GM12878 (cell line): ENCODE measurements at regions of chr16 and their contacts with region 1.

Region 1: GRCh38 chr16:27253526-27253930 is 15.0 kb downstream of the NSMCE1 start:
- DNase-seq: no peak
- ATAC-seq: peak; percentile 27
- H3K4me3 ChIP-seq: no peak overlapping the region
- H3K27ac ChIP-seq: peak overlapping the region; percentile 74
- H3K4me1 ChIP-seq: peaks cover 25% of the 10 kb centered on the region
- H3K27me3 ChIP-seq: no peaks in the 10 kb centered on the region
- CTCF ChIP-seq: no peak
- EP300 ChIP-seq: no peak
- POLR2A ChIP-seq: no peak
- RAD21 ChIP-seq: no peak

Region 2: DNA sequence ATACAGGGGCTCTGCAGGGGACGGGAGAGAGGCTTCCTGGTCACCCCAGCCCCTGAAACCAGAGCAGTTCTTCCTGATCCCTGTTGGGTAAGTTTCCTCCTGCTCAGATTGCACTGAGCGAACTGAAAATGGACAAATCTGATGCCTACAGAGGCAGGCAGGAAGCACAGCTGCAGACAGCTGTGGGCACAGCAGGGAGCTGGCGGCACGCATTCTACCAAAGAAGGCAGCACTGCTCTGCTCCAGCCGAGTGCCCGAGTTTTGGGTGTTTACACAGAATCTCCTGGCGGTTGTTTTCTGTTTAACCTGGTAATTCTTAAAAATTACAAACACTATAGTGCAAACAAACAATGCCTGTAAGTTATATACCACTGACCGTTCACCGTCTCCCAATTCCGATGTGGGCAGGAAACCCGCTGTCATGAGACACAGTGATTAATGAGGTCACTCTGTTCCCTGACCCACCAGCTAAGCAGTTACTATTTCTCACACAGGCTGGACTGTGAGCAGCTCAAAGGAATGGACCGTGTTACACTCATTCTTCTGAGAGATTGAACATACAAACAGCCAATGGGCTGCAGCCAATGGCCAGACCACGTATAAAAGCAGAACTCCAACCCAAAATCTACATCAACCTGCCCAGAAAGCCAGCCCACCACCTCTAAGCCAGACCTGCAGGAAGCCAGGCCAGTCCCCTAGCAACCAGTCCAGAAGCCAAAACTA is 10.5 kb before region 1 on chr16:
- CTCF ChIA-PET with region 1: interaction called, 38 read pairs
- POLR2A ChIA-PET with region 1: interaction called, 79 read pairs
- RAD21 ChIA-PET with region 1: interaction called, 51 read pairs
- SMC1A ChIA-PET with region 1: interaction called, 165 read pairs
- in situ Hi-C with region 1: no loop called
- intact Hi-C with region 1: no loop called
- DNase-seq: peak; percentile 71
- ATAC-seq: peak; percentile 91
- H3K4me3 ChIP-seq: peak overlapping the region; percentile 30; the same call in 1 of the 2 replicates
- H3K27ac ChIP-seq: peak overlapping the region; percentile 47
- H3K4me1 ChIP-seq: peaks cover 20% of the 10 kb centered on the region
- H3K27me3 ChIP-seq: no peaks in the 10 kb centered on the region
- CTCF ChIP-seq: no peak
- EP300 ChIP-seq: peak in 1 of 2 experiments; percentile 72; a peak in 2 of 4 replicates
- POLR2A ChIP-seq: no peak
- RAD21 ChIP-seq: no peak

Region 3: DNA sequence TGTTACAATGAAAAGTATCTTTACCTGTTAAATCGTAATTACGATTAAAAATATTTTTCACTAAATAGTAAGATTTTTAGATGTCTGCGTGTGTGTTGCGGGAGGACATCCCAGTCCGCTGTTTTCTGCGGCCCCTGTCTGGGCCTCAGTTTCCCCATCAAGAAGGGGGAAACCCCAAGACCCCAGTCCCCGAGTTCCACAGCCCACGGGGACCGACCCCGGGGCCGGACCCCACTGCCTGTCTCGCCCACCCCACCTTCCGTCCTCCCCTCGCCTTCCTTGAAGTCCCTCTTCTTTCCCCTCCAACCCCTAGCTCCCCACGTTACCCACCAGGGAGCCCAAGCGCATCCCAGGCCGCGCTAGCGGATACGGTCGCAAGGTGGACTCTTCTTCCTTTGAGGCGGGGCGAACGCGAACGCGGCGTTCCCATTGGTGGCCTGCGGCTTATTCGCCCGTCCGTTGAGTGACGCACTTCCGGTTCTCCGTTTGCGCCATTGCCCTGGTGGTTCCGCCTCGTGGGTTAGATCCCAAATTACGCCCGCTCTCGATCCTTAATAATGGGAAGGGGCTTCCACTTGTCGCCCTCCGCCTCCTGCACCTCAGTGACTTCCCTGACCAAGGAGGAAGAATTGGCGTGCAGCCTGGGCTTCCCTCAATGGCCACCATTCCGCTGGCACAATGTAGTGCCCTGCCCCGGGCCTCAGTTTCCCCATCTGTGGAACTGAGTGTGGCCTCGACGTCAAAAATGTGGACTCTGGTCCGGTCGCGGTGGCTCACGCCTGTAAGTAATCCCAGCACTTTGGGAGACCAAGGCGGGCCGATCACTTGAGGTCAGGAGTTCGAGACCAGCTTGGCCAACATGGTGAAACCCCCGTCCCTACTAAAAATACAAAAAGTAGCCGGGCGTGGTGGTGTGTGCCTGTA is 15.1 kb after region 1 on chr16 and contains the start of gene NSMCE1:
- CTCF ChIA-PET with region 1: interaction called, 12 read pairs
- POLR2A ChIA-PET with region 1: interaction called, 14 read pairs
- RAD21 ChIA-PET with region 1: interaction called, 40 read pairs
- SMC1A ChIA-PET with region 1: interaction called, 67 read pairs
- in situ Hi-C with region 1: no loop called
- intact Hi-C with region 1: no loop called
- DNase-seq: peak; percentile 84
- ATAC-seq: peak; percentile 95
- H3K4me3 ChIP-seq: peak within 1 kb of the TSS; percentile 81
- H3K27ac ChIP-seq: peak within 1 kb of the TSS; percentile 79
- H3K4me1 ChIP-seq: peaks cover 4% of the 10 kb centered on the region
- H3K27me3 ChIP-seq: no peaks in the 10 kb centered on the region
- CTCF ChIP-seq: peak; percentile 12 to 42 (median 13); a peak in 2 of 6 replicates
- EP300 ChIP-seq: 0 out of 4 replicates have a peak, but pooled peaks have one; percentile 21 to 25
- POLR2A ChIP-seq: peak; percentile 96
- RAD21 ChIP-seq: no peak
- polyA plus RNA-seq, gene NSMCE1: 168 to 214 TPM

Region 4: GRCh38 chr16:27273670-27274423 is 20.3 kb after region 1 on chr16:
- CTCF ChIA-PET with region 1: interaction called, 12 read pairs
- POLR2A ChIA-PET with region 1: interaction called, 14 read pairs
- RAD21 ChIA-PET with region 1: interaction called, 40 read pairs
- SMC1A ChIA-PET with region 1: interaction called, 67 read pairs
- in situ Hi-C with region 1: no loop called
- intact Hi-C with region 1: no loop called
- DNase-seq: no peak
- ATAC-seq: peak; percentile 82
- H3K4me3 ChIP-seq: no peak overlapping the region
- H3K27ac ChIP-seq: no peak overlapping the region
- H3K4me1 ChIP-seq: peaks cover 16% of the 10 kb centered on the region
- H3K27me3 ChIP-seq: no peaks in the 10 kb centered on the region
- CTCF ChIP-seq: no peak
- EP300 ChIP-seq: 0 out of 4 replicates have a peak, but pooled peaks of 1 of the 2 experiments have one; percentile 17
- POLR2A ChIP-seq: no peak
- RAD21 ChIP-seq: no peak

Region 5: GRCh38 chr16:27286451-27286850 is 32.9 kb after region 1 on chr16:
- CTCF ChIA-PET with region 1: interaction called, 7 read pairs
- POLR2A ChIA-PET with region 1: interaction called, 16 read pairs
- RAD21 ChIA-PET with region 1: interaction called, 9 read pairs
- SMC1A ChIA-PET with region 1: interaction called, 7 read pairs
- in situ Hi-C with region 1: no loop called
- intact Hi-C with region 1: no loop called
- DNase-seq: no peak
- ATAC-seq: no peak
- H3K4me3 ChIP-seq: no peak overlapping the region
- H3K27ac ChIP-seq: no peak overlapping the region
- H3K4me1 ChIP-seq: peaks cover 40% of the 10 kb centered on the region
- H3K27me3 ChIP-seq: 0 out of 4 replicates have a peak, but pooled peaks cover 0 to 3% of the 10 kb centered on the region in 2 experiments
- CTCF ChIP-seq: no peak
- EP300 ChIP-seq: no peak
- POLR2A ChIP-seq: no peak
- RAD21 ChIP-seq: no peak